ENCODE measurements at regions of chr4 and their contacts with region 1.

Region 1: DNA sequence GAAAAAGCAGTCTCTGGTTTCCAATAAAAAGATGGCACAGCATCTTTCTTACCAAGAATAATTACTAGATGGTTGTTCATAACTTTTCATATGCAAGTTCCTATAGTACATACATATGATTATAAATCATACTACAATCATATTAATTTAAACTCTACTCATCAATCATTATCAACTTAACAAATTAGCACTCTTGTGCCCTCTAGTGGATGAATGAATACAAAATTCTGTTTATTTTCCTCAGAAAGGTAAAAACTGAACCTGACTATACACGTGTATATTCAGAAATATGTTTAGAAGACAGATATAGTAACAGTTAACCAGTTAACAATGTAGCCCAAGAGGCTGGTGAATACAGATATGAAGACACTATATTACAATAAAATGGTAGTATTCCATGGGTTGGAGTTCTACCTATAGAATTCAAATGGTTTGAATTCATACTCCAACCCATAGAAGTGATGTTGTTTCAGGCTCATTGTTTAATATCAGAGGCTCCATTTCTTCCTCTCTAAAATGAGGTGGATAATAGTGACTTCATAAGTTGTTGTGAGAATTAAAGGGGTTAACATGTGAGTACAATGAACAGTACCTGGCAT is 100.0 kb downstream of the ADAMTS3 start:
- DNase-seq: no peak
- H3K4me3 Mint-ChIP-seq: no peak overlapping the region
- H3K27ac Mint-ChIP-seq: no peak overlapping the region
- H3K4me1 Mint-ChIP-seq: no peaks in the 10 kb centered on the region
- H3K27me3 Mint-ChIP-seq: no peaks in the 10 kb centered on the region

Region 2: GRCh38 chr4:72295966-72296557 is 172.9 kb before region 1 on chr4:
- CTCF ChIA-PET with region 1: no interaction called
- intact Hi-C with region 1: loop called (anchors 1 kb)
- DNase-seq: no peak
- H3K4me3 Mint-ChIP-seq: no peak overlapping the region
- H3K27ac Mint-ChIP-seq: no peak overlapping the region
- H3K4me1 Mint-ChIP-seq: no peaks in the 10 kb centered on the region
- H3K27me3 Mint-ChIP-seq: peaks cover 10% of the 10 kb centered on the region

Region 3: DNA sequence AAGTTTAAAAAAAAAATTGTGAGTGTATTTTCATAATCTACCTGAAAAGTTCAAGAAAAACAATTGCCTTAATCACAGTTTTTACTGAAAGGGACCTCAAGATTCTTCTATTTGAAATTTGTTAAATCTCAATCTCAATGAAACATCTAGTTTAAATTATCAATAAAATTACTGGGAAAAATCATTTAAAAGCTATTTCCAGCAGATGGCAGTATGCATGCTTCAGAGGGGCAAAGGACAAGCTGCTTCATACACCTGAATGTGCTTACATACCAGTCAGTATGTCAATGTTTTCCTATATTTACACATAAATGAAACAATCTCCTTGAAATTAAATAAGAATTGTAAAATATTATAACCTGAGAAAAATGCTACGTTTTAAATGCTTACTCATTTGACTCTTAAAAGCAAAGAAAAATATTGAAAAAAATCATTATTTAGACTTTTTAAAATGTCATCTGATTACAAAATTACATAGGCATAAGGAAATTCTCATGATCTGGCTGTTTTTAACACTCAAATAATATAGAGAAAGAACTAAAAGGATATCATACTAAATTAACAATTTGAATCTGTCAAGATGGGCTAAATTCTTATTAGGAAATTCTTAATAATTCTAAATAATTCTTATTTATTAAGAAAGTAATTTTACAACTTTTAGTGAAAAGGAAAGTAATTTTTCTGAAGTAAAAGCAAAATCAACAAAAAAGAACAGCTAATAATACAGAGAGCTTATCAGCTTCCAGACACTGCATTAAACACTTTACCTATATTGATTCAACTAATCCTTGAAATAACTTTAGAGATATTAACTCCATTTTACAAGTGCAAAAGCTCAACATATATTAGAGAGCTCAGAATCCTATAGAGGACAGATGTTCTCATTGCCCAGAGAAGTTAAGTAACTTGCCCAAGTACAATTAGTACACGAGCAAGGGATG is 142.0 kb before region 1 on chr4:
- CTCF ChIA-PET with region 1: no interaction called
- intact Hi-C with region 1: loop called (anchors 1 kb)
- DNase-seq: no peak
- H3K4me3 Mint-ChIP-seq: no peak overlapping the region
- H3K27ac Mint-ChIP-seq: no peak overlapping the region
- H3K4me1 Mint-ChIP-seq: no peaks in the 10 kb centered on the region
- H3K27me3 Mint-ChIP-seq: peaks cover 10% of the 10 kb centered on the region

Region 4: GRCh38 chr4:72761368-72762038 is 292.5 kb after region 1 on chr4:
- CTCF ChIA-PET with region 1: no interaction called
- intact Hi-C with region 1: no loop called
- DNase-seq: no peak
- H3K4me3 Mint-ChIP-seq: no peak overlapping the region
- H3K27ac Mint-ChIP-seq: no peak overlapping the region
- H3K4me1 Mint-ChIP-seq: no peaks in the 10 kb centered on the region
- H3K27me3 Mint-ChIP-seq: no peaks in the 10 kb centered on the region